ENCODE measurements at regions of chr18 and their contacts with region 1.

Region 1: DNA sequence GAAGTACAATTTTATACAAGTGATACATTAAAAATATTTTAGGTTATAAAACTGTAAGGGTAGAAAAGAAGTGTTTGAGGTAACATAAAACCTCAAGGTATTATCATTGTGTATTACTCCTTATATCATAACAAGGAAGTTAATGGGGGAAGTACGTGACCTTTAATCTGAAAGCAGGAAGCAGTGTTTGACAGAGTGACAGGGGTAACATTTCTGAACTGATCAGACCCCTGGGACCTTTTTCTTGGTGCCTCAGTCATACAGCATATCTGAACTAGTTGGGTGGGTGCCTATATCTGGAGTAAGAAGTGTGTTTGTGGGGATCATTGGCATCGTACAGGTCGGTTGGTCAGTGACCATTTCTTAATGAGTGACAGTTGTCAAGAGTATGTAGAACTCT is 43.0 kb downstream of the MALT1 start:
- DNase-seq: no peak
- H3K4me3 ChIP-seq: no peak overlapping the region
- CTCF ChIP-seq: no peak
- POLR2A ChIP-seq: no peak

Region 2: GRCh38 chr18:58800582-58800981 is 86.3 kb after region 1 on chr18:
- intact Hi-C with region 1: no loop called
- DNase-seq: no peak
- H3K4me3 ChIP-seq: no peak overlapping the region
- CTCF ChIP-seq: no peak
- POLR2A ChIP-seq: no peak

Region 3: DNA sequence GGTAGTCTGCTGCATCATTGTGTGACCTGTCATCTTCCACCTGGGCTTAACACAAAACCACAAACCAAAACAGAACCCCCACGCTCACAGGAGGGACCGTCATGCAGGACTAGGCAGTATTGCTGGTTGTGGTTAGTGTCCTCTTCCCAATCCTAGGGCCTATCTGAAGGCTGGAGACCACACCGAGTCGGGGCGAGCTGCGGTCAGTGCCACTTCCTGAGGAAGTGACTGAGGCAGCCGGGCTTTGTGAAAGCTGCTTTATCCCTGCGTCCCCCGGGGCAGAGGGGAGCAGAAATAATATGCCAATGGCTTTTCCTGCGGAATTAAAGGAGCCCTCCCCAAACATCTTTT is 173.3 kb after region 1 on chr18:
- intact Hi-C with region 1: loop called (anchors 5 kb)
- DNase-seq: peak in 1 of 2 donors; percentile 50
- H3K4me3 ChIP-seq: no peak overlapping the region
- CTCF ChIP-seq: no peak
- POLR2A ChIP-seq: no peak